ENCODE measurements at regions of chr21 and their contacts with region 1.

Region 1: GRCh38 chr21:43034098-43034497 is 41.5 kb downstream of the CBS start:
- DNase-seq: no peak
- H3K4me3 ChIP-seq: no peak overlapping the region
- H3K27ac ChIP-seq: no peak overlapping the region
- H3K4me1 ChIP-seq: no peaks in the 10 kb centered on the region
- H3K27me3 ChIP-seq: no peaks in the 10 kb centered on the region
- CTCF ChIP-seq: no peak
- POLR2A ChIP-seq: no peak

Region 2: GRCh38 chr21:42171091-42172053 is 862.7 kb before region 1 on chr21:
- intact Hi-C with region 1: no loop called
- DNase-seq: peak in 6 of 7 donors; percentile 35 to 74 (median 46)
- H3K4me3 ChIP-seq: no peak overlapping the region
- H3K27ac ChIP-seq: peak overlapping the region in 1 of 5 donors; percentile 31
- H3K4me1 ChIP-seq: no peaks in the 10 kb centered on the region
- H3K27me3 ChIP-seq: no peaks in the 10 kb centered on the region
- CTCF ChIP-seq: no peak
- POLR2A ChIP-seq: no peak

Region 3: GRCh38 chr21:42956819-42957632 is 77.1 kb before region 1 on chr21:
- intact Hi-C with region 1: loop called in 1 of 2 experiments (anchors 2 kb)
- DNase-seq: peak in 1 of 7 donors; percentile 14
- H3K4me3 ChIP-seq: no peak overlapping the region
- H3K27ac ChIP-seq: no peak overlapping the region
- H3K4me1 ChIP-seq: no peaks in the 10 kb centered on the region
- H3K27me3 ChIP-seq: no peaks in the 10 kb centered on the region
- CTCF ChIP-seq: no peak
- POLR2A ChIP-seq: no peak

Measured in adrenal gland (tissue), 19 donors.